CD4-positive, alpha-beta memory T cell (primary cell): ENCODE measurements at regions of chr10 and their contacts with region 1.

Region 1: DNA sequence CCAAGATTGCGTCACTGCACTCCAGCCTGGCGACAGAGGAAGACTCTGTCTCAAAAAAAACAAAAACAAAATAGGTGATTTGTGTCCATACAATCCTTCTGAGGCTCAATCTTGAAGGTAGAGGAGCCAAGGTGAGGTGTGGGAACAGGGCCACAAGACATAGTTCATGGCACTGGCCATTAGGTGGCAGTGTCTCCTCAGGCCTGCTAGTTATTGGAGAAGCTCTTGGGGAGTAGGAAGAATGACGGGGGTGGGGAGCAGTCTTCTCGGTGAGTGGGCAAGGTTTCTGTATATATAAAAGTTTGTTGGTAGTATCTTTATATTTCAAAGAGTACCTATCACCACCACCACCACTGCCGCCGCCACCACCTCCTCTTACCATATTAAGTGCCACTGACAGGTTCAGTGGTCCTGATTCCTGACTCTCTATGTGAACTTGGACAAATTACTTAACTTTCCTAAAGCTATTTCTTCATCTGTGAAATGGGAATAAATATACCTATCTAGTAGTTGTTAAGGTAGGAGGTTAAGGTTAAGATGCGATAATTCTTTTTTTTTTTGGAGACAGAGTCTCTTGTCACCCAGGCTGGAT is 24.0 kb downstream of the CCSER2 start:
- DNase-seq: peak; percentile 52 to 78 (median 60)
- H3K4me3 ChIP-seq: no peak overlapping the region
- H3K4me3 Mint-ChIP-seq: peak overlapping the region in 2 of 8 donors; percentile 34 to 40
- H3K27ac ChIP-seq: no peak overlapping the region
- H3K27ac Mint-ChIP-seq: peak overlapping the region; percentile 4 to 85 (median 22)
- H3K4me1 ChIP-seq: peaks cover 56% of the 10 kb centered on the region
- H3K4me1 Mint-ChIP-seq: peaks cover 43 to 77% (median 60%) of the 10 kb centered on the region in 4 donors
- H3K27me3 ChIP-seq: no peaks in the 10 kb centered on the region
- H3K27me3 Mint-ChIP-seq: no peaks in the 10 kb centered on the region

Region 2: GRCh38 chr10:84264611-84265141 is 87.7 kb before region 1 on chr10:
- CTCF ChIA-PET with region 1: interaction called, 8 read pairs
- POLR2A ChIA-PET with region 1: no interaction called
- intact Hi-C with region 1: loop called (anchors 1 kb)
- DNase-seq: peak; percentile 57 to 68 (median 58)
- H3K4me3 ChIP-seq: no peak overlapping the region
- H3K4me3 Mint-ChIP-seq: no peak overlapping the region
- H3K27ac ChIP-seq: no peak overlapping the region
- H3K27ac Mint-ChIP-seq: no peak overlapping the region
- H3K4me1 ChIP-seq: no peaks in the 10 kb centered on the region
- H3K4me1 Mint-ChIP-seq: peaks cover 8 to 15% (median 10%) of the 10 kb centered on the region in 4 donors
- H3K27me3 ChIP-seq: no peaks in the 10 kb centered on the region
- H3K27me3 Mint-ChIP-seq: peaks cover 10 to 27% of the 10 kb centered on the region in 2 donors

Region 3: GRCh38 chr10:84328418-84329195 is 23.7 kb before region 1 on chr10 and contains the start of gene CCSER2:
- CTCF ChIA-PET with region 1: interaction called, 71 read pairs
- POLR2A ChIA-PET with region 1: interaction called, 8 read pairs
- intact Hi-C with region 1: loop called (anchors 2 kb)
- DNase-seq: peak; percentile 87 to 93 (median 89)
- H3K4me3 ChIP-seq: peak within 1 kb of the TSS; percentile 61 to 64
- H3K4me3 Mint-ChIP-seq: peak within 1 kb of the TSS; percentile 90 to 97 (median 96)
- H3K27ac ChIP-seq: peak within 1 kb of the TSS; percentile 98
- H3K27ac Mint-ChIP-seq: peak within 1 kb of the TSS; percentile 97 to 100 (median 99)
- H3K4me1 ChIP-seq: peaks cover 39% of the 10 kb centered on the region
- H3K4me1 Mint-ChIP-seq: peaks cover 24 to 47% (median 30%) of the 10 kb centered on the region in 4 donors
- H3K27me3 ChIP-seq: no peaks in the 10 kb centered on the region
- H3K27me3 Mint-ChIP-seq: peaks cover 0 to 2% of the 10 kb centered on the region in 2 donors
- total RNA-seq, gene CCSER2: 144 to 151 TPM

Region 4: DNA sequence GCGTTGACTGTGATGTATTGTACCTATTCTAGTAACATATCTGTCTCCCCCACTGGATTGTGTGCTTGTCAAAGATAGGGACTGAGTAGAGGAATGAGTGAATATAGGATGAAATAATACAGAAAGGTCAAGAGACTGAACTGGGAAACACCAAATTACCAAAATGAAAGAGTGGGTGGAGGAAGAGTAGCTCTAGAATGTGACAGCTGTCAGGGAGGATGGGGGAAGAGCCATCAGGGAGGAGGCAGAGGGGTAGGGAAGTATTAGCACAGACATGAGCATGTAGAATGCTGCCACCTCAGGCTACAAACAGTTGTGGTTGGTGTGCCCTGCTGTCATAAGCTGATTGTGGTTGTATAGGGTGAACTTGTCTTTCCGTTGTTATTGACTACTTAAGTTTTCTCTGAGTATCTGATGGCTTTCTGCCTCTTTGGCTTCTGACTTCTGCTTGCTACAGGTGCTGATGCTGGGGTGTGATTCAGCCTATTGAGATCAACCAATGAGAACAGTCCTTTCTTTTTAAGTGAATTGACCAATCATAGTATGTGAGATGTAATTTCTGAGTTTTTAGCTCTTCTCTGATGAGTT is 18.4 kb before region 1 on chr10:
- CTCF ChIA-PET with region 1: interaction called, 71 read pairs
- POLR2A ChIA-PET with region 1: interaction called, 8 read pairs
- intact Hi-C with region 1: loop called (anchors 2 kb)
- DNase-seq: peak; percentile 85 to 95 (median 90)
- H3K4me3 ChIP-seq: peak overlapping the region in 1 of 2 donors; percentile 46
- H3K4me3 Mint-ChIP-seq: peak overlapping the region; percentile 8 to 78 (median 68)
- H3K27ac ChIP-seq: peak overlapping the region; percentile 62
- H3K27ac Mint-ChIP-seq: peak overlapping the region in 4 of 7 donors; percentile 93 to 100 (median 95)
- H3K4me1 ChIP-seq: peaks cover 91% of the 10 kb centered on the region
- H3K4me1 Mint-ChIP-seq: peaks cover 36 to 58% (median 39%) of the 10 kb centered on the region in 4 donors
- H3K27me3 ChIP-seq: no peaks in the 10 kb centered on the region
- H3K27me3 Mint-ChIP-seq: no peaks in the 10 kb centered on the region

Region 5: DNA sequence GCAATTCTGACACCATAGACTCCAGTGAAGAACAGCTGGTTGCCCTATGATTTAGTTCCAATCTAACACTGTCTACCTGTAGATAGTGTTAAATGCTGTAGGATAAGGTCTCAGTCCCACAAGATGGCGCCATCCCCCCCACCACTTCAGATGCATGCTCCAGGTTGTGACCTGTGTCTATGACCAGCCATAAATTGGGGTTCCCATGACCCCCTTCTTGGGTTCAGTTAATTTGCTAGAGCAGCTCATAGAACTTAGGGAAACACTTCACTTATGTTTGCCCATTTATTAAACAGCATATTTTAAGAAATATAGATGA is 10.8 kb before region 1 on chr10:
- CTCF ChIA-PET with region 1: interaction called, 71 read pairs
- POLR2A ChIA-PET with region 1: interaction called, 3 read pairs
- intact Hi-C with region 1: no loop called
- DNase-seq: no peak
- H3K4me3 ChIP-seq: no peak overlapping the region
- H3K4me3 Mint-ChIP-seq: peak overlapping the region in 3 of 8 donors; percentile 14 to 49 (median 32)
- H3K27ac ChIP-seq: no peak overlapping the region
- H3K27ac Mint-ChIP-seq: peak overlapping the region in 3 of 7 donors; percentile 31 to 76 (median 44)
- H3K4me1 ChIP-seq: peaks cover 75% of the 10 kb centered on the region
- H3K4me1 Mint-ChIP-seq: peaks cover 53 to 61% (median 57%) of the 10 kb centered on the region in 4 donors
- H3K27me3 ChIP-seq: no peaks in the 10 kb centered on the region
- H3K27me3 Mint-ChIP-seq: no peaks in the 10 kb centered on the region

Region 6: DNA sequence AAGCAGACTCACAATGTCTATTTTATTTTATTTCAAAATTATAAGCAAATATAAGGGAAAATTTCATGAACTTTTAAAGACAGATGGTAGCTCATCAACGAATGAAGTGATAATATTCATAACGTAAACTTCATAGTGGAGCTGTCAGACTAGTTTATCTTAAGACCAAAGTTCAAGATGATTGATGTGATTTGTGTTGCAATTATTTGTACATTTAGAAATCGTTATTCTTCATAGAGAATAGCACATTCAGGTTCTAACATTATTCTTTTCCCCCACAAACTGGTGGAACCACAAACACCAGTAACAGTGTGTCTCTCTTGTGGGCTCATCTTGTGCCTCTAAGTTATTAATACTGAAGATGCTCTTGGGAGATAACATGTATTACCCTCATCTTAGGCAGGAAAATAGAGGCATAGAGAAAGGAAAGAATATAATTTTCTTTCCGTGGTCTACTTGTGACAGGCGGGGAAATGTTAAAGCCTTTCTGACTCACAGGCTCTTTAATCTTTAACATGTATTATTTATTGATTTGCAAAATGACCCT is 13.1 kb after region 1 on chr10:
- CTCF ChIA-PET with region 1: interaction called, 49 read pairs
- POLR2A ChIA-PET with region 1: no interaction called
- intact Hi-C with region 1: no loop called
- DNase-seq: no peak
- H3K4me3 ChIP-seq: no peak overlapping the region
- H3K4me3 Mint-ChIP-seq: no peak overlapping the region
- H3K27ac ChIP-seq: no peak overlapping the region
- H3K27ac Mint-ChIP-seq: peak overlapping the region in 3 of 7 donors; percentile 1 to 39 (median 20)
- H3K4me1 ChIP-seq: peaks cover 41% of the 10 kb centered on the region
- H3K4me1 Mint-ChIP-seq: peaks cover 57 to 83% (median 62%) of the 10 kb centered on the region in 4 donors
- H3K27me3 ChIP-seq: no peaks in the 10 kb centered on the region
- H3K27me3 Mint-ChIP-seq: no peaks in the 10 kb centered on the region

Region 7: DNA sequence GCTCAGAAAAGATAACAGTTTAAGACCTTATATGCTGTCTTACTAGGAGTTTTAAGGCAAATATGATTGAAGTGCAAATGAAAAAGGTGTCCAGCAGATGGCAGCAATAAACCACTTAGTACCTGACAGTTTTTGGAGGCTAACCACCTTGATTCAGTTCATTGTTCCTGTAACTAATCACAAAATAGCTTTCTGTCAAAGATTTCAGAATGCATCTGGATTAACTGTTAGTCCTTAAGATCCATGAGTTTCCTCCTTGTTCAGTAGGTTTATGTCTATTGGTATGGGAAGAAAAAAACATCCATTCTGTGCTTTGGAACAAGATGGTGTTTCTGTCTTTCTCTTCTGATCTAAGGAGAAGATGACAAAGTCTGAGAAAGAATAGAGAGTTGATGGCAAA is 22.7 kb after region 1 on chr10:
- CTCF ChIA-PET with region 1: interaction called, 23 read pairs
- POLR2A ChIA-PET with region 1: interaction called, 3 read pairs
- intact Hi-C with region 1: loop called (anchors 1 kb)
- DNase-seq: peak; percentile 35 to 57 (median 51)
- H3K4me3 ChIP-seq: no peak overlapping the region
- H3K4me3 Mint-ChIP-seq: peak overlapping the region in 2 of 8 donors; percentile 7 to 45
- H3K27ac ChIP-seq: no peak overlapping the region
- H3K27ac Mint-ChIP-seq: peak overlapping the region; percentile 1 to 61 (median 29)
- H3K4me1 ChIP-seq: peaks cover 8% of the 10 kb centered on the region
- H3K4me1 Mint-ChIP-seq: peaks cover 26 to 58% (median 29%) of the 10 kb centered on the region in 4 donors
- H3K27me3 ChIP-seq: no peaks in the 10 kb centered on the region
- H3K27me3 Mint-ChIP-seq: no peaks in the 10 kb centered on the region